Psoas muscle (tissue), 8 donors: ENCODE measurements at regions of chr3 and their contacts with region 1.

Region 1: GRCh38 chr3:65785065-65785645 is 253.6 kb downstream of the MAGI1 start:
- DNase-seq: no peak
- ATAC-seq: peak in 2 of 4 donors; percentile 41 to 61
- H3K4me3 ChIP-seq: no peak overlapping the region
- H3K27ac ChIP-seq: no peak overlapping the region
- H3K4me1 ChIP-seq: no peaks in the 10 kb centered on the region
- H3K27me3 ChIP-seq: no peaks in the 10 kb centered on the region
- CTCF ChIP-seq: peak; percentile 77

Region 2: DNA sequence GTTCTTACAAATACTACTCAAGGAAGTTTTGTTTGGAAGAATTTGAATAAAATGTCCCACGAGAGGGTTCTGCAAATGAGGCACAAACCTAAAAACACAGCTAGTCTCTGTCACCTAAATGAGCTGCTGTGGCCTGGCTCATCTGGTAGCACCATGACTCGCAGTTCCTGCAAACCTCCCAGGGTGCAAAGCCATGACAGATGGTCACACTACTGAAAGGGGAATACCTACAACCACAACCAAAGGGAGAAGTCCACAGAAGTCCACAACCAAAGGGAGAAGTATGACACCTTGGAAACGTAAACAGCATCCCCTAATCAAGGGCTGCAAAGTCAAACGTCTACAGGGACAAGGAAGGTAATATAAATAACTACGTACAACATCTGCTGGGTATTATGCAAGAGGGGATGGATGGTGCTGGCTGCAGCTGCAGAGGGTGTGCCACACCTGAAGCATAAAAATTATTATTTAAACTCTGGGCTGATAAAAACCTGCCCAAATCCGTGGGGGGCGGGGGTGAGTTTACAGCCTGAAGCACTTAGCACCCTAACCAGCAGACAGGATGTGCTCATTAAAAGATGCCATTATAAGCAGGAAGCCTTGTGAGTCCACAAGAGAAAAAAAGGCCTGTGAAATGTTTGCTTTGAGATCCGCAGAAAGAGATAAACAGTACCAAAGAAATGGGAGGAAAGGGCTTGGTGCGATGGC is 69.6 kb after region 1 on chr3:
- intact Hi-C with region 1: no loop called
- DNase-seq: no peak
- ATAC-seq: no peak
- H3K4me3 ChIP-seq: no peak overlapping the region
- H3K27ac ChIP-seq: no peak overlapping the region
- H3K4me1 ChIP-seq: peaks cover 5% of the 10 kb centered on the region
- H3K27me3 ChIP-seq: no peaks in the 10 kb centered on the region
- CTCF ChIP-seq: no peak

Region 3: GRCh38 chr3:65902304-65902793 is 117.2 kb after region 1 on chr3:
- intact Hi-C with region 1: loop called in 1 of 2 experiments (anchors 10 kb)
- DNase-seq: no peak
- ATAC-seq: no peak
- H3K4me3 ChIP-seq: no peak overlapping the region
- H3K27ac ChIP-seq: no peak overlapping the region
- H3K4me1 ChIP-seq: no peaks in the 10 kb centered on the region
- H3K27me3 ChIP-seq: no peaks in the 10 kb centered on the region
- CTCF ChIP-seq: no peak

Region 4: GRCh38 chr3:65914740-65915367 is 129.7 kb after region 1 on chr3:
- intact Hi-C with region 1: loop called in 1 of 2 experiments (anchors 10 kb)
- DNase-seq: no peak
- ATAC-seq: peak in 2 of 4 donors; percentile 39 to 55
- H3K4me3 ChIP-seq: no peak overlapping the region
- H3K27ac ChIP-seq: no peak overlapping the region
- H3K4me1 ChIP-seq: peaks cover 7% of the 10 kb centered on the region
- H3K27me3 ChIP-seq: no peaks in the 10 kb centered on the region
- CTCF ChIP-seq: peak; percentile 7

Region 5: DNA sequence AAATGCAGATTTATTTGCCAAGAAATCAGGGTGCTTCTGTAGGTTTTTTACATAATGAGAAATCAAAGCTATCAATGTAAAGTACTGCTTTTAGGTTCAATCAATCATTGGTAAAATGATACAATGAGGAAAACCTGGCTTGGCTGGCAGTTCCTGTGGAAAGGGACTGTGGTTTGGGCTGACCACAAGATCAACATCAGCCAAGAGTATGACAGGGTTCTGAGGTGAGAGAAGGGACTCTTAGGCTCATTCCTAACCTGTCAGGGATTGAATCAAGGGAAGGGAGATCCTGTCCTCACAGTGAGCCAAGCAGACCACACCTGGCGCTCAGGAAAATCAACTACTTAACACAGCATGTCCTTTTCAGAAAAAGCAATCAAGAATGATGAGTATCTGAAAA is 142.4 kb after region 1 on chr3:
- intact Hi-C with region 1: no loop called
- DNase-seq: no peak
- ATAC-seq: no peak
- H3K4me3 ChIP-seq: no peak overlapping the region
- H3K27ac ChIP-seq: no peak overlapping the region
- H3K4me1 ChIP-seq: peaks cover 4% of the 10 kb centered on the region
- H3K27me3 ChIP-seq: no peaks in the 10 kb centered on the region
- CTCF ChIP-seq: no peak

Region 6: DNA sequence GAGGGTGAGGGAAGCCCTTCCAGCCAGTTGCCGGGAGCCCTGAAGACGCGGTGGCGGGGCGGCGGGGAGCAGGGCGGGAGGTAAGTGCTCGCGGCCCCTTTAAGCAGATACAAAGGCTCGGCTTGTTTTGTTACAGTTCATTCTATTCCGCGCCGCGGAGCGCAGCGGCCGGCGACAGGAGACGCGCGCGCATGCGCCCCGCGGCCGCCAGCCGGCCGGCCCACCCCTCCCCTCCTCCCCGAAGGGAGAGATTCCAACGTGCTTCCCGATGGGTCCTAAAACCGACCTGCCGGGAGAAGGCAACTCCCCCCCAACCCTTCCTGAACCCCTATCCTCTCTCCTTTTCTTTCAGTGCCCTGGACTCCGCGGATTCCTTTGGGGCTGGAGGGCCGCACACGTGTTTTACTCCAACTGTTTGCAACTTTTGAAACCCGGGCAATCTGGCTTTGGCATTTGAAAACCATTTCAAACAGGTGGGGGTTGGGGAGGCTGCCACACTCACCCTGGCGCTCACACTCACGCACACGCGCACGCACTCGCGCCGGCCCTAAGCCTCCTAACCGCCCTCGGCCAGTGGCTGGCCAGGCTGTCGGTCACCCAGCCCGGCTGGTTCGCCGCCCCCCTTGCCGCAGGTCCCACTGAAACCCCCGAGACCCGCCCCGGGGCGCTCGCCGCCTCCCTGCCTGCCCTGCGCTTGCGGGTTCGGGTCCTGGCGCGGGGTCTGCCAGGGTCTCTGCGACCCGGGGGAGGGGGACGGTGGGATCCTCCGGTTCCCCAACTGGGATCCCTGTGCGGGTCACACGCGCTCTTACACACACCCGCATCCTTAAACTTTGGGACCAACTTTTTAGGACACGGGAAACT is 253.8 kb after region 1 on chr3 and contains the start of gene MAGI1:
- intact Hi-C with region 1: loop called (anchors 5 to 10 kb)
- DNase-seq: peak; percentile 88 to 94
- ATAC-seq: peak; percentile 93 to 94 (median 94)
- H3K4me3 ChIP-seq: peak within 1 kb of the TSS; percentile 75
- H3K27ac ChIP-seq: peak within 1 kb of the TSS; percentile 95
- H3K4me1 ChIP-seq: peaks cover 6% of the 10 kb centered on the region
- H3K27me3 ChIP-seq: no peaks in the 10 kb centered on the region
- CTCF ChIP-seq: no peak
- total RNA-seq, gene MAGI1: 4.5 to 6.7 (median 6.2) TPM

Region 7: GRCh38 chr3:66047311-66048050 is 262.3 kb after region 1 on chr3:
- intact Hi-C with region 1: loop called in 1 of 2 experiments (anchors 10 kb)
- DNase-seq: no peak
- ATAC-seq: peak in 1 of 4 donors; percentile 59
- H3K4me3 ChIP-seq: no peak overlapping the region
- H3K27ac ChIP-seq: no peak overlapping the region
- H3K4me1 ChIP-seq: peaks cover 3% of the 10 kb centered on the region
- H3K27me3 ChIP-seq: no peaks in the 10 kb centered on the region
- CTCF ChIP-seq: no peak

Region 8: GRCh38 chr3:66138336-66139313 is 353.5 kb after region 1 on chr3:
- intact Hi-C with region 1: loop called (anchors 2 kb)
- DNase-seq: peak in 1 of 2 donors; percentile 26
- ATAC-seq: peak; percentile 79 to 91 (median 88)
- H3K4me3 ChIP-seq: no peak overlapping the region
- H3K27ac ChIP-seq: no peak overlapping the region
- H3K4me1 ChIP-seq: peaks cover 3% of the 10 kb centered on the region
- H3K27me3 ChIP-seq: no peaks in the 10 kb centered on the region
- CTCF ChIP-seq: peak; percentile 79

Region 9: DNA sequence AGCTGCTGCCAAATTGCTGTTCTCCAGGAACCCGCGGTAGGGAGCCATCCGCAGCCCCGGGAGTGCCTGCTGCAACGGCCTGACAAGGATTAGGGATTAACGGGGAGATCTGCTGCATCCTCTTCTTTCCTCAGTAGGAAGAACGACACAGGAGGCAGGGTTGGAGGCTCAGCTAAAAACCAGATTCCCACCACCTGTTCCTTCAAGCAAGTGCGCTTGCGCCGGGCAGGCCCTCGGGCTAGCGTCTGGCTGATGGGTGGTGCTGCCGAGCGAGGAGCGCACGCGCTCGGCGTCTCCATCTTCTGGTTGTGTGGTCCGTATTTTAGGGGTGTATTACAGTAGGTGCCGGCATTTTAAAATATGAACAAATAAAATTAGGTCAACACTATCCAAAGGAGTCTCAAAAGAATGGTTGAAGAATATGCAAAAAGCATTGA is 410.2 kb after region 1 on chr3:
- intact Hi-C with region 1: loop called (anchors 5 kb)
- DNase-seq: peak; percentile 44 to 72
- ATAC-seq: peak; percentile 61 to 85 (median 77)
- H3K4me3 ChIP-seq: peak overlapping the region; percentile 51
- H3K27ac ChIP-seq: no peak overlapping the region
- H3K4me1 ChIP-seq: peaks cover 5% of the 10 kb centered on the region
- H3K27me3 ChIP-seq: no peaks in the 10 kb centered on the region
- CTCF ChIP-seq: no peak

Region 10: GRCh38 chr3:66561367-66561766 is 776.2 kb after region 1 on chr3:
- intact Hi-C with region 1: no loop called
- DNase-seq: no peak
- ATAC-seq: peak; percentile 72 to 95 (median 89)
- H3K4me3 ChIP-seq: no peak overlapping the region
- H3K27ac ChIP-seq: no peak overlapping the region
- H3K4me1 ChIP-seq: no peaks in the 10 kb centered on the region
- H3K27me3 ChIP-seq: no peaks in the 10 kb centered on the region
- CTCF ChIP-seq: no peak